ENCODE measurements at regions of chr11 and their contacts with region 1.

Region 1: GRCh38 chr11:46119352-46120216 is 1.7 kb downstream of the PHF21A start:
- DNase-seq: peak; percentile 83 to 94 (median 92)
- H3K4me3 ChIP-seq: peak overlapping the region; percentile 60 to 89 (median 83)
- H3K27ac ChIP-seq: peak overlapping the region; percentile 71 to 83
- H3K4me1 ChIP-seq: peaks cover 12 to 58% (median 32%) of the 10 kb centered on the region in 4 experiments
- H3K27me3 ChIP-seq: no peaks in the 10 kb centered on the region

Region 2: DNA sequence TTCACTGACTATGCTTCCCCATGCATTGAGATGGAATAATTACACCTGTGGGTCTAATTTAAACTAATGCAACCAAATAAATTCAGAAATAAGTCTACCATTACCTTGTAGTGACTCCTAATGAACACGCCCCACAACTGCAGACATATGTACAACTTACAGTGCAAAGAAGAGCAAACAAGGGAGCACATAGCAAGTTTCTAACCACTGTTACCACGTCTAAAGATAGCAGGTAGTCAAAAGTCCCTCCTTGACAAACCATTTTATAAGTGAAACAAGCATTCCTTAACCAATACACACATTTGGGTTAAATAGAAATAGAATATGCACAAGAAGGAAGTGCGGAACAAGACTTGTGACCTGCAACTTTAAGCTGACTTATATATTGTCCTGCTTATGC is 18.9 kb before region 1 on chr11:
- CTCF ChIA-PET with region 1: interaction called, 50 read pairs
- POLR2A ChIA-PET with region 1: no interaction called
- DNase-seq: peak in 1 of 3 donors; percentile 36
- H3K4me3 ChIP-seq: peak overlapping the region in 4 of 7 experiments; percentile 10 to 71 (median 36)
- H3K27ac ChIP-seq: peak overlapping the region; percentile 65 to 94
- H3K4me1 ChIP-seq: peaks cover 12 to 38% (median 22%) of the 10 kb centered on the region in 4 experiments
- H3K27me3 ChIP-seq: no peaks in the 10 kb centered on the region